ENCODE measurements at regions of chr17 and their contacts with region 1.

Region 1: GRCh38 chr17:47840740-47841603 is at the start of gene SCRN2:
- DNase-seq: peak; percentile 88 to 93
- H3K4me3 ChIP-seq: peak within 1 kb of the TSS; percentile 82 to 93 (median 90)
- H3K27ac ChIP-seq: peak within 1 kb of the TSS; percentile 79 to 85
- H3K4me1 ChIP-seq: peaks cover 11 to 21% of the 10 kb centered on the region in 2 donors
- H3K27me3 ChIP-seq: no peaks in the 10 kb centered on the region
- CTCF ChIP-seq: peak; percentile 98 to 99 (median 98)
- POLR2A ChIP-seq: no peak
- total RNA-seq, gene SCRN2: 49.2 to 108 (median 54.9) TPM

Region 2: DNA sequence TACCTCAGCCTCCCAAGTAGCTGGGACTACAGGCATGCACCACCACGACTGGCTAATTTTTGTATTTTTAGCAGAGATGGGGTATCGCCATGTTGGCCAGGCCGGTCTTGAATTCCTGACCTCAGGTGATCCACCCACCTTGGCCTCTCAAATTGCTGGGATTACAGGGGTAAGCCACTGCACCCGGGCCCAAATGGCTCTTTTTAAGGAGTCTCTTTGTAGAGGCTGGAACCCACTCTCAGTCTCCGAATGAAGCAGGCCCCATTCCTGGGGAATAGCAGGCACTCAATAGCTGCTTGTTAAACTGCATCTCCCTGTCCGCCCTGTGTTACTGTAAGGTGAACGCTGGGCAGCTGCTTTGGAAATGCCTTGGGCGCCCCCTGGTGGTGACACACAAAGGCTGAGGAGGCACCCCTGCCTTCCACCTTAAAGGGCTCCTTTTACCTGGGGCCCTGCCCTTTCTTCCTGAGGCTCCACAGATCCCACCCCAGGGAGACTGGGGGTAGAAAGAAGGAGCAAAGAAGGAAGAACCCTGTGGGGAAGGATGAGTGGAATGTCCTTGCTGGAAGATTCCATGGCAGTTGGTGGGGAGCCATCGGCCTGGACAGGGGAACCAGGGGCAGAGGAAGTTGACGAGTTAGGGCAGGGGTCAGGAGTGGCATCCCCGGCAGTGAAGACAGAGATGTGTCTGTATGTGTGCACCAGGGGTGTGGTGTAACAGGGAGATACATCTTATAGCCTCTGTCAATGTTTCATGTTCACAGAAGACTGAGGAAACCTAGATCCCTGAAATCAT is 49.0 kb after region 1 on chr17:
- intact Hi-C with region 1: loop called (anchors 5 kb)
- DNase-seq: peak; percentile 86 to 94
- H3K4me3 ChIP-seq: no peak overlapping the region
- H3K27ac ChIP-seq: no peak overlapping the region
- H3K4me1 ChIP-seq: peaks cover 3 to 6% of the 10 kb centered on the region in 2 donors
- H3K27me3 ChIP-seq: no peaks in the 10 kb centered on the region
- CTCF ChIP-seq: peak; percentile 96 to 97 (median 97)
- POLR2A ChIP-seq: no peak